ENCODE measurements at regions of chr1 and their contacts with region 1.

Region 1: DNA sequence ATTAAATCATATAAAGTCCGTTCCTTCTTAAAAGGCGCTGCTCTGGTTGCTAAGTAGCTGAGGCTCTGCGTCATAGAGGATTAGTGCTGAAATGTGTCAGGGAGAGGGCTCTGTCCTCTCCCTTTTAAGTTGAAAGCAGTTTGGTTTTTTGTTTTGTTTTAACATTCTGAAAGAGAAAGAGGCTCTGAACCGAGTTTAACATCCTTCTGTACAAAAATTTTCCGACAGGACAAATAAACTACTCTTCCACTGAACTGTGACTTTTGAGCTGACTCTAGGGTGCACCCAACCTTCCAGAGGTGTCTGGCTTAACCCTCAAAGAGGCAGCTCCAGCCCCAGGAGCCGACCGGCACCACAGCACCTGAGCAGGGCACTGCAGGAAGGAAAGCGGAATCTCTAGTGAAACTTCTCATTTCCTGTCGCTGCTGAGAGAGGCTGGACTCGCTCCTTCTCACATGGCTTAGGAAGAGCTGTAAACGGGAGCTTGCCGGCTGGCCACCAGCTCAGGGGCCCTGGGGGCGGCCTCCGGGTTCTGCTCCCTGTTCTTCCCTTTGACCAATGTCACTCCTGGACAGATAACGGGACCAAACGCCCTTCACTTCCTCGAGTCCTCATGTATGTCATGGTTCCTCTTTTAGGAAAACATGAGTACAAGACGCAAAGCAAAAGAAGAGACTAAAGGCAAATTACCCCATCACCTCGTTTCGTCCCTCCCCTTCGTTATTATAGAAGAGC is 1.2 kb downstream of the VAV3 start:
- DNase-seq: peak; percentile 39 to 64
- H3K4me3 ChIP-seq: peak overlapping the region; percentile 52 to 74 (median 63)
- H3K27ac ChIP-seq: peak overlapping the region; percentile 70 to 89 (median 80)
- H3K4me1 ChIP-seq: peaks cover 4 to 35% (median 29%) of the 10 kb centered on the region in 4 donors
- H3K27me3 ChIP-seq: peaks cover 0 to 11% (median 0%) of the 10 kb centered on the region in 3 donors
- CTCF ChIP-seq: no peak
- EP300 ChIP-seq: no peak
- POLR2A ChIP-seq: no peak

Region 2: DNA sequence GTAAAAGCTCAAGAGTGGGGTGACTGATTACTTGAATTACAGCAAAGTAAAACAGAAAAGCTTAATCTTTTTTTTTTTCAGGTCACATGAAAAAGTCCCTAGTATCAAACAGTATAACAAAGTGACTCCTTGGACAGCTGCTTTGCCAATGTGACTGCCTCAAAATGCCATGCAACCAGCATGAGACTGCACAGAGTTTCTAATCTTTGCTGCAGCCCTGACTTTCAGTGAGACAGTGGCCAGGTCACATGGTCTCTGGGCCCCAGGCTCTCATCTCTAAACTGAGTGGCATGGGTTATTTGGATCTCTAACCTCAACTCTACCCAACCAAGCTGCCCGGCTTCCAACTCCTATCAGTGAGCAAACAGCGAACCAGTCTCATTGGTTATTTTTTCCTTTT is 167.8 kb before region 1 on chr1:
- intact Hi-C with region 1: loop called (anchors 10 kb)
- DNase-seq: no peak
- H3K4me3 ChIP-seq: no peak overlapping the region
- H3K27ac ChIP-seq: no peak overlapping the region
- H3K4me1 ChIP-seq: no peaks in the 10 kb centered on the region
- H3K27me3 ChIP-seq: no peaks in the 10 kb centered on the region
- CTCF ChIP-seq: no peak
- EP300 ChIP-seq: no peak
- POLR2A ChIP-seq: no peak

Region 3: GRCh38 chr1:107840725-107841124 is 123.0 kb before region 1 on chr1:
- intact Hi-C with region 1: no loop called
- DNase-seq: no peak
- H3K4me3 ChIP-seq: no peak overlapping the region
- H3K27ac ChIP-seq: peak overlapping the region in 1 of 5 donors; percentile 7
- H3K4me1 ChIP-seq: peaks cover 0 to 31% (median 8%) of the 10 kb centered on the region in 4 donors
- H3K27me3 ChIP-seq: no peaks in the 10 kb centered on the region
- CTCF ChIP-seq: no peak
- EP300 ChIP-seq: no peak
- POLR2A ChIP-seq: no peak

Region 4: GRCh38 chr1:107895403-107896191 is 68.2 kb before region 1 on chr1:
- intact Hi-C with region 1: no loop called
- DNase-seq: peak; percentile 17 to 30
- H3K4me3 ChIP-seq: no peak overlapping the region
- H3K27ac ChIP-seq: peak overlapping the region in 1 of 5 donors; percentile 53
- H3K4me1 ChIP-seq: peaks cover 0 to 8% (median 0%) of the 10 kb centered on the region in 4 donors
- H3K27me3 ChIP-seq: no peaks in the 10 kb centered on the region
- CTCF ChIP-seq: no peak
- EP300 ChIP-seq: no peak
- POLR2A ChIP-seq: no peak

Region 5: GRCh38 chr1:107914134-107914765 is 49.5 kb before region 1 on chr1:
- intact Hi-C with region 1: no loop called
- DNase-seq: peak in 1 of 2 donors; percentile 50
- H3K4me3 ChIP-seq: no peak overlapping the region
- H3K27ac ChIP-seq: peak overlapping the region in 3 of 5 donors; percentile 3 to 45 (median 22)
- H3K4me1 ChIP-seq: peaks cover 4 to 10% (median 7%) of the 10 kb centered on the region in 4 donors
- H3K27me3 ChIP-seq: no peaks in the 10 kb centered on the region
- CTCF ChIP-seq: no peak
- EP300 ChIP-seq: no peak
- POLR2A ChIP-seq: no peak